ENCODE measurements at regions of chr22 and their contacts with region 1.

Region 1: GRCh38 chr22:40224702-40225101 is 47.0 kb downstream of the TNRC6B start:
- DNase-seq: peak in 6 of 9 experiments; percentile 35 to 70 (median 52)
- ATAC-seq: peak; percentile 98
- H3K4me3 ChIP-seq: no peak overlapping the region
- H3K4me3 Mint-ChIP-seq: peak overlapping the region; percentile 22
- H3K27ac ChIP-seq: no peak overlapping the region
- H3K27ac Mint-ChIP-seq: peak overlapping the region; percentile 90
- H3K4me1 ChIP-seq: peaks cover 41% of the 10 kb centered on the region
- H3K4me1 Mint-ChIP-seq: peaks cover 67% of the 10 kb centered on the region
- H3K27me3 ChIP-seq: no peaks in the 10 kb centered on the region
- H3K27me3 Mint-ChIP-seq: no peaks in the 10 kb centered on the region
- CTCF ChIP-seq: no peak

Region 2: DNA sequence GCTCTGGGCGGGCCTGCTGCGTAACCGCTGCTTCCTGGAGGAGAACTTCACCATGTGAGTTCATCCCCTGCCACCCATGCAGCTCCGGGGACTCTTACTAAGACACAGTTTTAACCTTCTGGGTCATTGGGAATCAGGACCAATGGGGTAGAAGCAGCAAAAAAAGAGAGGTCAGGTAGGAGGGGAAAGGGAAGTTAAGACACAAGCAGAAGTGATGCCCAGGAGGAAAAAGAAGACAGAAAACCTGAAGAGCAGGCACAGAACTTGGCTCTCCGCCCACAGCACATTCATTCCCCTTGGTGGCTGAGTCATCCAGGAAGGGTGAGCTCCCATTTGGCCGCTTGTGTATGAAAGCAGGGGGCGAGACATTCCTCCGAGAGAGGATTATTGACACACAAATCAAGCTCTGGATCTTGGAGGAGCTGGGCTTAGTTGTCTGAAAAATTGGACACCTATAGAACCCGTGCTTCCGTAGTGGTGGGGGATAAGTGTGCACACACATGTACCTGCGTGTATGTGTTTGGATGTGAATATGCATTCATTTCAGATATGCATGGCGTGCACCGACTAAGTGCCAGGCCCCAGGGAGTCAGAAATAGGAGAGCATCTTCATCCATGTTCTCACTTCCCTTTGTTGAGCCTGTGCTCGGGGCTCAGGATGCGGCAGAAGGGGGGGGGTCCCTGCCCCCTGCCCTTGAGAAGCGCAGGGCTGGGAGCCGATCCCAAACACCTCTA is 589.9 kb before region 1 on chr22:
- CTCF ChIA-PET with region 1: no interaction called
- POLR2A ChIA-PET with region 1: no interaction called
- intact Hi-C with region 1: no loop called
- DNase-seq: no peak
- ATAC-seq: no peak
- H3K4me3 ChIP-seq: no peak overlapping the region
- H3K4me3 Mint-ChIP-seq: no peak overlapping the region
- H3K27ac ChIP-seq: no peak overlapping the region
- H3K27ac Mint-ChIP-seq: no peak overlapping the region
- H3K4me1 ChIP-seq: no peaks in the 10 kb centered on the region
- H3K4me1 Mint-ChIP-seq: peaks cover 2% of the 10 kb centered on the region
- H3K27me3 ChIP-seq: no peaks in the 10 kb centered on the region
- H3K27me3 Mint-ChIP-seq: no peaks in the 10 kb centered on the region
- CTCF ChIP-seq: no peak

Region 3: DNA sequence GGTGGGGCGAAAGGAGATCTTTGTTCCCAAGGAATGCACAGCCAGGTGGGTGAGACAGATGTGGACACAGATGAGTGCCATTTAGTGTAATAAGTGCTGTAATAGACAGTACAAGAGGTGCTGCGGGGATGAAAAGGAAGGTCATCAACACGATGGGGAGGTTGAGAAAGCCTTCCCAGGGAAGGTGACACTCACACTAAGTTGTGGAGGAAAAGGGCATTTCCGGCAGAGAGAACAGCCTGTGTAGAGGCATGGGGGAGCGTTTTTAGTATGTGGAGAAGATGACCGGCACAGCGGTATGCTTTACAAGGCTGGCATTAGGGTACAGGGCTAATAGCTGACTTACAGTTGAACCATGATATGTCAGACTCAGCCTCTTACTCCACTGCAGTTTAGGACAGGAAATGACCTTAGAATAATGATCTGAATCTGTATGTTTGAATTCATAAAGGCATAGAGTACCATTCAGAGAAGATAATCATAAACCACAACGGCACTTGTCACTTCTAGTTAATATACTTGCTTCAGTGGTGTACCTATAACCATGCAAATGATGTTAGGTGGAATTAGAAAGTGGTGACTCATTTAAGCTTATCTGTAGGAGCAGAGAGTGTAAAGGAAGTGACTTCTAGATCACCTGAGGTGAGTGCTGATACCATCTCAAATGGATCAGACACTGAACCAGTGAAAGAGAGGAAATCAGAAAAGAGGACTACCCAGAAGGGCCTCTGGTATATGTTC is 169.4 kb before region 1 on chr22:
- CTCF ChIA-PET with region 1: no interaction called
- POLR2A ChIA-PET with region 1: no interaction called
- intact Hi-C with region 1: no loop called
- DNase-seq: peak in 2 of 9 experiments; percentile 57 to 71
- ATAC-seq: peak; percentile 91
- H3K4me3 ChIP-seq: no peak overlapping the region
- H3K4me3 Mint-ChIP-seq: peak overlapping the region; percentile 53
- H3K27ac ChIP-seq: peak overlapping the region; percentile 16 to 70
- H3K27ac Mint-ChIP-seq: peak overlapping the region; percentile 86
- H3K4me1 ChIP-seq: peaks cover 83% of the 10 kb centered on the region
- H3K4me1 Mint-ChIP-seq: peaks cover 76% of the 10 kb centered on the region
- H3K27me3 ChIP-seq: no peaks in the 10 kb centered on the region
- H3K27me3 Mint-ChIP-seq: no peaks in the 10 kb centered on the region
- CTCF ChIP-seq: no peak

Region 4: GRCh38 chr22:40193429-40194421 is 31.0 kb before region 1 on chr22:
- CTCF ChIA-PET with region 1: interaction called, 4 read pairs
- POLR2A ChIA-PET with region 1: no interaction called
- intact Hi-C with region 1: loop called in 1 of 2 experiments (anchors 5 kb)
- DNase-seq: peak in 1 of 9 experiments; percentile 52
- ATAC-seq: peak; percentile 61
- H3K4me3 ChIP-seq: no peak overlapping the region
- H3K4me3 Mint-ChIP-seq: peak overlapping the region; percentile 32
- H3K27ac ChIP-seq: peak overlapping the region in 1 of 2 experiments; percentile 4
- H3K27ac Mint-ChIP-seq: peak overlapping the region; percentile 82
- H3K4me1 ChIP-seq: peaks cover 50% of the 10 kb centered on the region
- H3K4me1 Mint-ChIP-seq: peaks cover 82% of the 10 kb centered on the region
- H3K27me3 ChIP-seq: no peaks in the 10 kb centered on the region
- H3K27me3 Mint-ChIP-seq: no peaks in the 10 kb centered on the region
- CTCF ChIP-seq: peak; percentile 45

Region 5: GRCh38 chr22:41798736-41799135 is 1574.0 kb after region 1 on chr22:
- CTCF ChIA-PET with region 1: no interaction called
- POLR2A ChIA-PET with region 1: no interaction called
- intact Hi-C with region 1: no loop called
- DNase-seq: no peak
- ATAC-seq: no peak
- H3K4me3 ChIP-seq: no peak overlapping the region
- H3K4me3 Mint-ChIP-seq: peak overlapping the region; percentile 93
- H3K27ac ChIP-seq: peak overlapping the region in 1 of 2 experiments; percentile 90
- H3K27ac Mint-ChIP-seq: peak overlapping the region; percentile 98
- H3K4me1 ChIP-seq: peaks cover 22% of the 10 kb centered on the region
- H3K4me1 Mint-ChIP-seq: peaks cover 29% of the 10 kb centered on the region
- H3K27me3 ChIP-seq: no peaks in the 10 kb centered on the region
- H3K27me3 Mint-ChIP-seq: no peaks in the 10 kb centered on the region
- CTCF ChIP-seq: no peak

Measured in CD8-positive, alpha-beta T cell (primary cell).